ENCODE measurements at regions of chr4 and their contacts with region 1.

Region 1: DNA sequence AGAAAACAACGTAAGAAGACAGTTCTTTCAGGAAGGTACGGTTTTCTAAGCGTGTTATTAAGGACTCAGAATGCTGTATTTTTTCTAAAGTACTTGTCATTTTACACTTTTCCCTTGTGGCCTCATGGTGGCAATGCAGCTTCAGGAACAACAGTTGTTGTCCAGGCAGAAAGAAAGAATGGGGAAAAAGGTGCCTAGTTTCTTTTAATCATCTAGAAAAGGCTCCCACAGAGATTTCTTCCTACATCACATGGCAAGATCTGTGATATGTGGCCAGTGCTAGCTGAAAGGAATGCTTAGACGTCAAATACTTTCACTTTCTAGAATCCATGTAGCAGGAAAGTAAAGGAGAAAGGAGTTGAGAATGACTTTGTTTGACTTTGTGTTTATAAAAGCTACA is 49.0 kb upstream of the TRAM1L1 start:
- DNase-seq: no peak
- ATAC-seq: no peak
- H3K4me3 ChIP-seq: no peak overlapping the region
- H3K27ac ChIP-seq: no peak overlapping the region
- H3K4me1 ChIP-seq: no peaks in the 10 kb centered on the region
- H3K27me3 ChIP-seq: no peaks in the 10 kb centered on the region
- CTCF ChIP-seq: peak in 6 of 9 donors; percentile 11 to 34 (median 20)

Region 2: DNA sequence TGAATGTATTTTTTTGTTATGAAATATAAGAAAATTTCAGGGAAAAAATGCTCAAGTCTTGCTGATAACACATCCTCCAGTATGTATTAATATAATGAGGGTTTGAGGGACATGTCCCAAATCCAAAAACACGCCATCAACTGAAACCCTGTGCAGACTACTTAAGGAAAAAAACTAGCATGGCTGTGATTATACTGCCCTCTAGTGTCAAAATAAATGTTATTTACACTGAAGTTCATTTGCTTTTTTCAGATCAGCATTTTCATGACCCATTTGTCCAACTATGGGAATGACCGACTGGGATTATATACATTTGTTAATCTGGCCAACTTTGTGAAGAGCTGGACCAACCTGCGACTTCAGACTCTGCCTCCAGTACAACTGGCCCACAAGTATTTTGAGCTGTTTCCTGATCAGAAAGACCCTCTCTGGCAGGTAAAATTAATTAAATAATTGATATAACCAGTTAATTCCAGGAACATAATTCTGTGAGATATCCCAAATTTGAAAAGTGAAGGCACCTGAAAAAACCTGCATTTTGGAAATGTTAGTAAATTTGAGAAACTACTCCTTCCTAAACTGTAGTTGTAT is 1089.9 kb after region 1 on chr4:
- intact Hi-C with region 1: loop called in 1 of 10 experiments (anchors 5 kb)
- DNase-seq: no peak
- ATAC-seq: no peak
- H3K4me3 ChIP-seq: no peak overlapping the region
- H3K27ac ChIP-seq: no peak overlapping the region
- H3K4me1 ChIP-seq: peaks cover 0 to 3% (median 0%) of the 10 kb centered on the region in 9 donors
- H3K27me3 ChIP-seq: peaks cover 0 to 7% (median 0%) of the 10 kb centered on the region in 7 donors
- CTCF ChIP-seq: peak; percentile 35 to 73 (median 60)

Measured in heart right ventricle (tissue), 16 donors.